GM12878 (cell line): ENCODE measurements at regions of chr11 and their contacts with region 1.

Region 1: DNA sequence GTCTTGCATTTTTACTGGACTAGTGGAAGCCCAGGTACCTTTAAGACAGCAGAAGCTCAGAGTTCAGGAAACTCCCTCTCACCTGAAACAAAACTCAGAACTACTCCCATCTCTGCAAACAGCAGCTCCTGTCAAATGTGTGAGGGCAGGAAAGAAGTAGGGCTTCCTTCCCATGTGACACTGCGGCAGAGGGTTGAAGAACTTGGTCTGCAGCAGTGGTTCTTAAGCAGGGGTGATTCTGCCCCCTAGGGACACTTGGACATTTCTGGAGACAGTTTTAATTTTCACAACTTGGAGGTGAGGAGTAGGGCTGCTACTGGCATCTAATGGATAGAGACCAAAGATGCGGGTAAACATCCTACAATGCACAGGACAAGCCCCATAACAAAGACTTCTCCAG is 63.4 kb downstream of the RCN1 start:
- DNase-seq: peak; percentile 62
- ATAC-seq: peak; percentile 72
- H3K4me3 ChIP-seq: no peak overlapping the region
- H3K27ac ChIP-seq: peak overlapping the region; percentile 42; the same call in 1 of the 2 replicates
- H3K4me1 ChIP-seq: peaks cover 6% of the 10 kb centered on the region; the same call in 1 of the 2 replicates
- H3K27me3 ChIP-seq: no peaks in the 10 kb centered on the region
- CTCF ChIP-seq: peak in 2 of 3 experiments; percentile 13 to 46; a peak in 2 of 6 replicates
- EP300 ChIP-seq: no peak
- POLR2A ChIP-seq: no peak
- RAD21 ChIP-seq: peak; percentile 64

Region 2: DNA sequence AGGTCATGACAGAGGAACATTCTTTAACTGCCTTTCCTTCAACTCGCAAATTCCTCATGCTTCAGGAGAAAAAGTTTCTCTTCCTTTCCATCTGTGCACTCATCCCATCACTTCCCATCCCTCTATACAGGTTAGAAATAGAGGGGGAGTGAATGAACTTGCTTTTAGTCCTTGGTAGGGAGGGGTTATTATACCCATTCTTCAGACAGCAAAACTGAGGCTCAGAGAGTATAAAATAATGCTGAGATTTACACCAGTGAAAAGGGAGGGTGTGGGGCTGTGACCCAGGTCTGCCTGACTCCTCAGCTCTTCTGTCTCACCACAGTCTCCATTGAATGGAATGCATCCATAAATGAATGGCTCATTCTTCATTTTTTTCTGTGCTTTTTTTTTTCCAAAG is 172.8 kb before region 1 on chr11:
- CTCF ChIA-PET with region 1: no interaction called
- POLR2A ChIA-PET with region 1: no interaction called
- RAD21 ChIA-PET with region 1: no interaction called
- SMC1A ChIA-PET with region 1: no interaction called
- in situ Hi-C with region 1: no loop called
- intact Hi-C with region 1: no loop called
- DNase-seq: no peak
- ATAC-seq: no peak
- H3K4me3 ChIP-seq: no peak overlapping the region
- H3K27ac ChIP-seq: no peak overlapping the region
- H3K4me1 ChIP-seq: no peaks in the 10 kb centered on the region
- H3K27me3 ChIP-seq: no peaks in the 10 kb centered on the region; a peak in 2 of 4 replicates
- CTCF ChIP-seq: no peak
- EP300 ChIP-seq: no peak
- POLR2A ChIP-seq: no peak
- RAD21 ChIP-seq: no peak

Region 3: DNA sequence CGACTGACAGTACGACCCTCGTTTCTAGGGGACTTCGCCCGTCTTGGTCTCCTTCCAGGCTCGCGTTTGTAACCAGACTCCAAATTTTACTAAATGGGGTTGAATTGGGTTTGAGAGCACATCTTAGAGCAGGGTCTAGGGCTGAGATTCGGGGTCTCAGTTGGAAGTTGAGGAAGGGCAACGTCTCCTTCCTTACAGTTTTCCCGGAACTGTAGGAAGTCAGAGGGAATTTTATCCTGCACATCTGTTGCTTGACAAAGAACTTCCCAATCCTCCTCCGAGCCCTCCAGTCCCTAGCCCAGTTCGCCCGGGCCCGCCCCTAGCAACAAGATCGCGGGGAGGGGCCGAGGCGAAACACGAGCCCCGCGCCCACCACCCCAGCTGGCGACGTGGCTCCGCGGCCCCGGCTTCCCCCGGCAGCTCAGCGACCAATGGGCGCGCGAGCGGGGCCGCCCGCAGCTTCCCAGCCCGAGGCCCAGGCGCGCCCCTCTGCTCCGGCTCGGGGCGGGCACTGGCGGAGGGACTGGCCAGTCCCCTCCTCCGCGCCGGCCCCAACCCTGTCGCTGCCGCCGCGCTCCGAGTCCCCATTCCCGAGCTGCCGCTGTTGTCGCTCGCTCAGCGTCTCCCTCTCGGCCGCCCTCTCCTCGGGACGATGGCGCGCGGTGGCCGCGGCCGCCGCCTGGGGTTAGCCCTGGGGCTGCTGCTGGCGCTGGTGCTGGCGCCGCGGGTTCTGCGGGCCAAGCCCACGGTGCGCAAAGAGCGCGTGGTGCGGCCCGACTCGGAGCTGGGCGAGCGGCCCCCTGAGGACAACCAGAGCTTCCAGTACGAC is 63.5 kb before region 1 on chr11 and contains the start of gene RCN1:
- CTCF ChIA-PET with region 1: interaction called, 6 read pairs
- POLR2A ChIA-PET with region 1: interaction called, 3 read pairs
- RAD21 ChIA-PET with region 1: interaction called, 3 read pairs
- SMC1A ChIA-PET with region 1: interaction called, 11 read pairs
- in situ Hi-C with region 1: no loop called
- intact Hi-C with region 1: loop called (anchors 5 kb)
- DNase-seq: no peak
- ATAC-seq: peak; percentile 80
- H3K4me3 ChIP-seq: peak within 1 kb of the TSS; percentile 94
- H3K27ac ChIP-seq: peak within 1 kb of the TSS; percentile 95
- H3K4me1 ChIP-seq: peaks cover 13% of the 10 kb centered on the region
- H3K27me3 ChIP-seq: no peaks in the 10 kb centered on the region
- CTCF ChIP-seq: no peak
- EP300 ChIP-seq: no peak
- POLR2A ChIP-seq: peak; percentile 78
- RAD21 ChIP-seq: no peak
- polyA plus RNA-seq, gene RCN1: 17.6 to 37.4 TPM

Region 4: DNA sequence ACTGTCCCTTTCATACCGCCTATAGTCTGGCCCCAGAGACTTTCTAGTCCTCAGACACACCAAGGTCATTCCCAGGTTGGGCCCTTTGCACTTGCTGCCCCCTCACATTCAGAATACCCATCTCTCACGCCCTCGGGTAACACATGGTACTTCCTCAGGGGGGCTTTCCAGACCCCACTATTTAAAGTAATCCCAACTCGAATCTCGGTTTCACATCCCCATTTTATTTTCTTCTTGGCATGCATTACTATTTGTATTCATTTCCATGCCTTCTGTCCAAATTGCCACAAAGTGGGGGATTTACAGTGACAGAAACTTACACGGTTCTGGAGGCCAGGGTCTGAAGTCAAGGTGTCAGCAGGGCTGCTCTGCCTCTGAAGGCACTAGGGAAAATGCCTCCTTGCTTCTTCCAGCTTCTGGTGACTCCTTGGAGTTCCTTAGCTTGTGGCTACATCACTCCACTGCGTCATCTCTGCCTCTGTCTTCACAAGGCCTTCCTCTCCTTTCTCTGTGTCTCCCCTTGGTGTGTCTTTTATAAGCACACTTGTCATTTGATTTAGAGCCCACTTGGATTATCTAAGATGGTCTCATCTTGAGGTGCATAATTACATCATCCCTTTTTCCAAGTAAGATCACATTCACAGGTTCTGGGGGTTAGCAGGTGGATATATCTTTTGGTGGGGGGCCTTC is 48.3 kb before region 1 on chr11:
- CTCF ChIA-PET with region 1: interaction called, 4 read pairs
- POLR2A ChIA-PET with region 1: interaction called, 6 read pairs
- RAD21 ChIA-PET with region 1: interaction called, 16 read pairs
- SMC1A ChIA-PET with region 1: interaction called, 8 read pairs
- in situ Hi-C with region 1: no loop called
- intact Hi-C with region 1: loop called (anchors 1 kb)
- DNase-seq: peak; percentile 81
- ATAC-seq: peak; percentile 91
- H3K4me3 ChIP-seq: peak overlapping the region; percentile 33
- H3K27ac ChIP-seq: peak overlapping the region; percentile 82
- H3K4me1 ChIP-seq: peaks cover 22% of the 10 kb centered on the region
- H3K27me3 ChIP-seq: no peaks in the 10 kb centered on the region
- CTCF ChIP-seq: no peak
- EP300 ChIP-seq: peak; percentile 82
- POLR2A ChIP-seq: no peak; the same call in 1 of the 2 replicates
- RAD21 ChIP-seq: no peak

Region 5: DNA sequence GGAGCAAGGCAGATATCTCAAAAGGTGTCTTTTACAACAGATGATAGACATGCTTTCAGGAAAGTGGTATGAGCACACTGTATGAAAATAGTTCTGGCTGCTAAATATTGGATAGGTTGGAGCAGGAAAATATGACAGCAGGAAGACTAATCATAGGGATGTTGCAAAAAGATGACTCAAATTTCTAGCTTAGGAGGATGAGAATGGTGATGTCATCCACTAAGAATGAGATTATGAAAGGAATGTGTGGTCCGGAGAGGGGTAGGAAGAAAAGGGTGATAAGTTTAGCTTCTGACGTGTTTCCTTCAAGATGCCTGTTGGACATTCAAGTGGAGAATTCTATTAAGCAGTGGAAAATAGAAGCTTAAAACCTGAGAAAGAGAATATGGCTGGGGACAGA is 17.0 kb before region 1 on chr11:
- CTCF ChIA-PET with region 1: interaction called, 3 read pairs
- POLR2A ChIA-PET with region 1: no interaction called
- RAD21 ChIA-PET with region 1: no interaction called
- SMC1A ChIA-PET with region 1: interaction called, 10 read pairs
- in situ Hi-C with region 1: no loop called
- intact Hi-C with region 1: no loop called
- DNase-seq: no peak
- ATAC-seq: no peak; the same call in 2 of the 3 replicates
- H3K4me3 ChIP-seq: no peak overlapping the region
- H3K27ac ChIP-seq: peak overlapping the region; percentile 24
- H3K4me1 ChIP-seq: no peaks in the 10 kb centered on the region
- H3K27me3 ChIP-seq: no peaks in the 10 kb centered on the region
- CTCF ChIP-seq: no peak
- EP300 ChIP-seq: no peak
- POLR2A ChIP-seq: no peak
- RAD21 ChIP-seq: no peak